Activated B cell treated with CpG ODN at 0.5 μM for 24 hours (primary cell): ENCODE measurements at regions of chr2 and their contacts with region 1.

Region 1: GRCh38 chr2:73253901-73254300 is 19.8 kb downstream of the CCT7 start:
- DNase-seq: no peak
- ATAC-seq: no peak
- H3K4me3 Mint-ChIP-seq: no peak overlapping the region
- H3K27ac Mint-ChIP-seq: no peak overlapping the region
- H3K4me1 Mint-ChIP-seq: no peaks in the 10 kb centered on the region
- H3K27me3 Mint-ChIP-seq: no peaks in the 10 kb centered on the region
- CTCF ChIP-seq: no peak

Region 2: GRCh38 chr2:73218298-73218697 is 35.6 kb before region 1 on chr2:
- CTCF ChIA-PET with region 1: no interaction called
- POLR2A ChIA-PET with region 1: no interaction called
- intact Hi-C with region 1: no loop called
- DNase-seq: no peak
- ATAC-seq: no peak
- H3K4me3 Mint-ChIP-seq: no peak overlapping the region
- H3K27ac Mint-ChIP-seq: no peak overlapping the region
- H3K4me1 Mint-ChIP-seq: peaks cover 23% of the 10 kb centered on the region
- H3K27me3 Mint-ChIP-seq: no peaks in the 10 kb centered on the region
- CTCF ChIP-seq: no peak

Region 3: DNA sequence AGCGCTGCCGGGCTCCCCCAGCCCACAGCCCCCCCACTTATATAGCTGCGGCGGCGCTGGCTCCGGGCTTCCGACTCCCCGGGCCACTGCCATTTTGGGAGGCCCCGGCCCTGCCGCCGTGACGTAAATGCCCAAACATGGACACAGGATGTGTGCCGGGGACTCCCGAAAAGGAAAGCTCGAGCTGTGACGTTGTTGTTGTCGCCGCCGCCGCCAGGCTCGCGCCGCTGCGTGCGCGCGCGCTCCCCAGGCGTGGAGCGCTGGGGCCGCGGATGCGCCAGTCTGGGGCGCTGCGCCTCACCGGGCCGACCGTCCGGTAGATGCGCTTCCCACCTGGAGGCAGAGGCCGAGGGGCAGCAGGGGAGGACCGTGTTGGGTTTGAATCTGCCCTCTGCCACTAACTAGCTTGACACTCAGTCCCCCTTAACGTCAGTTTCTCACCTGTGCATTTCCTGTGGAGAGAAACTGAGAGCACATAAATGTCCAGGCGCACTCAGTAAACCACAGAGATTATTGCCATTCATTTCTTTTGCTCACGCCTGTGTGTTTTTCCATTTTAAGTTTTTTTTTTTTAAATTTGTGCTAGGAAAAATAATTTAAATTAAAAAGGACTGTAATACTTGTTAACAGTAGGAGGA is 39.8 kb after region 1 on chr2 and contains the start of gene EGR4:
- CTCF ChIA-PET with region 1: interaction called, 5 read pairs
- POLR2A ChIA-PET with region 1: no interaction called
- intact Hi-C with region 1: loop called (anchors 5 kb)
- DNase-seq: peak; percentile 68
- ATAC-seq: peak; percentile 87
- H3K4me3 Mint-ChIP-seq: peak within 1 kb of the TSS; percentile 77
- H3K27ac Mint-ChIP-seq: no peak within 1 kb of the TSS
- H3K4me1 Mint-ChIP-seq: peaks cover 28% of the 10 kb centered on the region
- H3K27me3 Mint-ChIP-seq: peaks cover 41% of the 10 kb centered on the region
- CTCF ChIP-seq: no peak
- total RNA-seq, gene EGR4: 0.20 TPM in 1 of 2 replicates, not detected in the other

Region 4: GRCh38 chr2:73457982-73458381 is 204.1 kb after region 1 on chr2:
- CTCF ChIA-PET with region 1: no interaction called
- POLR2A ChIA-PET with region 1: no interaction called
- intact Hi-C with region 1: no loop called
- DNase-seq: no peak
- ATAC-seq: no peak
- H3K4me3 Mint-ChIP-seq: no peak overlapping the region
- H3K27ac Mint-ChIP-seq: no peak overlapping the region
- H3K4me1 Mint-ChIP-seq: no peaks in the 10 kb centered on the region
- H3K27me3 Mint-ChIP-seq: no peaks in the 10 kb centered on the region
- CTCF ChIP-seq: no peak

Region 5: GRCh38 chr2:73907840-73908452 is 654.0 kb after region 1 on chr2:
- CTCF ChIA-PET with region 1: no interaction called
- POLR2A ChIA-PET with region 1: no interaction called
- intact Hi-C with region 1: no loop called
- DNase-seq: peak; percentile 23
- ATAC-seq: peak; percentile 93
- H3K4me3 Mint-ChIP-seq: no peak overlapping the region
- H3K27ac Mint-ChIP-seq: no peak overlapping the region
- H3K4me1 Mint-ChIP-seq: peaks cover 2% of the 10 kb centered on the region
- H3K27me3 Mint-ChIP-seq: no peaks in the 10 kb centered on the region
- CTCF ChIP-seq: no peak